K562 (cell line): ENCODE measurements at regions of chr16 and their contacts with region 1.

Region 1: GRCh38 chr16:85610508-85611332 is 2.4 kb upstream of the GSE1 start:
- DNase-seq: peak; percentile 78 to 95 (median 83)
- ATAC-seq: peak; percentile 59
- H3K4me3 ChIP-seq: peak overlapping the region; percentile 85
- H3K27ac ChIP-seq: peak overlapping the region; percentile 99
- H3K4me1 ChIP-seq: peaks cover 58 to 87% of the 10 kb centered on the region in 2 experiments
- H3K27me3 ChIP-seq: no peaks in the 10 kb centered on the region
- CTCF ChIP-seq: peak; percentile 97 to 100 (median 99)
- EP300 ChIP-seq: peak; percentile 60
- POLR2A ChIP-seq: 0 out of 2 replicates have a peak, but pooled peaks have one; percentile 20
- RAD21 ChIP-seq: peak; percentile 96 to 97

Region 2: DNA sequence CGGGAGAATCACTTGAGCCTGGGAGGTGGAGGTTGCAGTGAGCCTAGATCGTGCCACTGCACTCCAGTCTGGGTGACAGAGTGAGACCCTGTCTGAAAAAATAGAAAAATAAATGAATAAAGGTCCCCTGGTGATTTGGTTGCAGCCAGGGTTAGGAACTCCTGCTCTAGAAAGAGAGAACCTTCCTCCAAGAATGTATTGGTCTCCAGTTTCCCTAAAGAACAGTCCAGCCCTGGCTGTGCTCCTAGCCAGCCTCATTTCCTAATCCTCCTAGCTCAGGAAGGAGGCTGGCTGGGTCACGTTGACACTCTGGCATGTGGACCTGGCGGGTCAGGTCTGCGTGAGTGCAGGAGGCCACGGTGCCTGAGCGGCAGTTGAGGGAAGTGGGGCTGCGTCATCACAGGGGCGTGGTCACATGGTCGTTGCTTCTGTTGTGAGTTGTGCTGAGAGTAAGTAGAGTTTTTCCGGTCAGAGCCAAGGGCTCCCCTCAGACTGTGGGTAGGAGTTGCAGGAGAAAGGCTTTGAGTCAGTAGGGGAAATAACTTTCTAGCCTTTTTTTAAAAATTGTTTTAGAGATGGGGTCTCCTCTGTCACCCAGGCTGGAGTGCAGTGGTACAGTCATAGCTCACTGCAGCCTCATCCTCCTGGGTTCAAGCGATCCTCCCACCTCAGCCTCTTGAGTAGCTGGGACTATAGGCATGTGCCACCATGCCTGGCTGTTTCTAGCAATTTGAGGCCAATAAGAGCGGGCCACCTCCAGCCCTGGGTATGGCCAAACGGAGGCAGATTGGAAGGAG is 304.5 kb before region 1 on chr16:
- CTCF ChIA-PET with region 1: interaction called, 5 read pairs
- POLR2A ChIA-PET with region 1: no interaction called
- in situ Hi-C with region 1: no loop called
- intact Hi-C with region 1: loop called (anchors 10 kb)
- DNase-seq: peak; percentile 76 to 95 (median 82)
- ATAC-seq: peak; percentile 83
- H3K4me3 ChIP-seq: no peak overlapping the region
- H3K27ac ChIP-seq: peak overlapping the region; percentile 87
- H3K4me1 ChIP-seq: peaks cover 70 to 94% of the 10 kb centered on the region in 2 experiments
- H3K27me3 ChIP-seq: no peaks in the 10 kb centered on the region
- CTCF ChIP-seq: no peak
- EP300 ChIP-seq: peak; percentile 58
- POLR2A ChIP-seq: peak; percentile 57; the same call in 1 of the 2 replicates
- RAD21 ChIP-seq: no peak; a peak in 1 of 4 replicates

Region 3: DNA sequence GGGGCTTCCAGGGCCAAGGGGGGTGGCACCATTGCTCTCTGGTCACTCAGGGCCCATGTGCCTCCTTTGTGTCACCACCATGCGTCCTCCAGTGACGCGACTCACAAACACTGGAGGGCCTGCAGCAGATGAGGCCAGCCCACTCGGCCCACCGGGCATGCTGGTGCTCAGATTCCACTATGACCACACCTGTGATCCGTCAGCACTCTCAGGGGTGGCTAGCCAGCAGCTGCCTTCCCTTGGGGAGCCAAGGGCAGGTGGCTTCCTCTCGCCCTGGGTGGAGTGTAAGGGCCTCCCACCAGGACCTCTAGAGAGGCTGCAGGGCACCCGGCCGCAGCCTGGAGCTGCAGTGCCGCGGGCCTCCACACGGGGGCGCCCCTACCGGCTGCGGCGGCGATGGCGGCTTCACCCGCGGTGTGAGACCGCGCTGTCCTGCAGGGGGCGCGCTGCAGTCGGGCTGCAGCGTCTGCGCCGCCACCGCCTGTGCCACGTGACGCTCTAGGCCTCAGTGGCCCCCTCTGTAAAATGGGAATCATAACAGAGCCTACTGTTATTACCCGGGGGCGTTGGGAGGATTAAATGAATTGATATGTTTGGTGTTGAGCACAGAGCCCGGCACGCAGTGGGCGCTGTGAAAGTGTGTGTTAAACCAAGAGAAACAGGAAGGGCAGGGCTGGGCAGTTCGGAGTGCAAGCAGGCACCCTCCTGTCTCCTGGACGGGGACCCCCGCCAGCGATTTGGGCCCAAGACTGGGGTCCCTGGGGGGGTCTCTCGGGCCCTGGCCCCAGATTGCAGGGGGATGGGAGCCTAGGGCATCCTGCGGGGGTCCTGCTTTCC is 190.0 kb before region 1 on chr16:
- CTCF ChIA-PET with region 1: interaction called, 16 read pairs
- POLR2A ChIA-PET with region 1: interaction called, 3 read pairs
- in situ Hi-C with region 1: no loop called
- intact Hi-C with region 1: loop called (anchors 1 kb)
- DNase-seq: peak; percentile 92 to 94 (median 92)
- ATAC-seq: peak; percentile 83
- H3K4me3 ChIP-seq: no peak overlapping the region
- H3K27ac ChIP-seq: no peak overlapping the region; the same call in 2 of the 3 replicates
- H3K4me1 ChIP-seq: peaks cover 23 to 87% of the 10 kb centered on the region in 2 experiments
- H3K27me3 ChIP-seq: no peaks in the 10 kb centered on the region
- CTCF ChIP-seq: peak; percentile 100
- EP300 ChIP-seq: no peak
- POLR2A ChIP-seq: no peak
- RAD21 ChIP-seq: peak; percentile 98 to 99

Region 4: DNA sequence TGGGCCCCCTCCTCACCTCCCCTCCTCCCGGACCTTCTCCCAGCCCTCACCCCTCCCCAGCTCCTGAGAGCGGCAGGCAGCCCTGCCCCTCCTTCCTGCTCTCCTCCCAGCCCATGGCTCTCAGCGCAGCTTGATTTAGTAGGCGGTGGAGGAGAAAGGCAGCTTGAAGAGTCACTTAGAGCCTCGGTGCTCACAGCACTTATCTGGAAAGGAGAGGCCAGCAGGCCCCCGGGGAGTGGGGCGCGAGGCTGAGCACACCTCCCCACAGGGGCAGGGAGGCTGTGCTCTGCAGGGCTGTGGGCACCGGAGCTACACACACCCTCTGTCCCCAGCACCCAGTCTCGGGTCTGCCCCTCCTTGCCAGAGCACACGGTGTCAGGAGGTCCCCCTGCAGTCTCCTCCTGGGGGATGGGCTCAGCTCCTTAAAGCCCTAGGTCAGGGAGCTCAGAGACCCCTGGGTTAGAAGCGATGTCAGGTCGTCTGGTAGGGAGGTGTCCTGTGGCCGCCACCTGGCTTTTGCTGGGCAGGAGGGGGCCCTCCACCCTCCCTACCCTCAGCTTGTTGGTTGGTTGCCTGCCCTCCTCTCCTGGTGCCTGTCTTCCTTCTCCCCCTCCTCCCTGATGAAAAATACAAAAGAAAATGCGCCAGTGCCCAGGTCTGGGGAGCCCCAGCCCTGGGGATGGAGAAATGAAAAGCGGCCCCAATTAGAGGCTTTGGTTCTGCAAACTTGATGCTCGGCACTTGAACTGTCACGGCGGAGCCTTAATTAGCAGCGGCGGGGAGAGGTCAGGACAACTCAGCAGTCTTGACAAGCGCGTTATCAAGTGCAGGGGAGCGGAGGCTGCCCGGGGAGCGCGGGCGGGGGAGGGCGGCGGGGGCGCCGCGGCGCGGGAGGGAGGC is 148.7 kb before region 1 on chr16:
- CTCF ChIA-PET with region 1: interaction called, 4 read pairs
- POLR2A ChIA-PET with region 1: no interaction called
- in situ Hi-C with region 1: no loop called
- intact Hi-C with region 1: loop called (anchors 5 kb)
- DNase-seq: peak; percentile 95 to 97 (median 96)
- ATAC-seq: peak; percentile 88
- H3K4me3 ChIP-seq: peak overlapping the region; percentile 34
- H3K27ac ChIP-seq: peak overlapping the region; percentile 78
- H3K4me1 ChIP-seq: peaks cover 45 to 85% of the 10 kb centered on the region in 2 experiments
- H3K27me3 ChIP-seq: no peaks in the 10 kb centered on the region
- CTCF ChIP-seq: peak in 1 of 3 experiments; percentile 6; a peak in 1 of 6 replicates
- EP300 ChIP-seq: peak; percentile 67; the same call in 1 of the 2 replicates
- POLR2A ChIP-seq: no peak; the same call in 1 of the 2 replicates
- RAD21 ChIP-seq: no peak; a peak in 1 of 4 replicates

Region 5: DNA sequence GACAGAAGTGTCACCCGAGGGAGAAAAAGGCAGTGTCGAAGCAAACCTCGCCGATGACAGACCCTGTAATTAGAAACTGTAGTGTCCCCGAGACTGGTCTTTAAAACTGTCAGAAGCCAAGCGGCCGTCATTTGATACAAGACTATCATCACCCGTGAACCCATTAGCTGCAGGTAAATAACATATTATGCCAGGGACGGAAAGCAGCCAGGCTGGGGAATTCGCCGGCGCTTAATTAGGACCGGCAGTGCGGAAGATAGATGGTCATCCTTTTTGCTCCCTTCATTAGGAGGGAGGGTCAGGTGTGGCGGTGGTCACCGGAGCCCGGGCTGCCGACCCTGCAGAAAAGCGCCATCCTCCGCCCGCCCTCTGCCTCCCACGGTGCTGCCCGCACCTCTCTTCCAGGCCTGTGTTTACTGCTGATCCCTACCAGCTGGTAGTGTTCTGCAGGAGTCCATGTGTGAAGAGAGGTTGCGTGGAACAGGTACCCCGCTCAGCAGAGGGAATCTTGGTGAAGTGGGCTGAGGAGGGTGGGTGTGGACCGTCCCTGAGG is 107.0 kb before region 1 on chr16:
- CTCF ChIA-PET with region 1: no interaction called
- POLR2A ChIA-PET with region 1: no interaction called
- in situ Hi-C with region 1: no loop called
- intact Hi-C with region 1: no loop called
- DNase-seq: no peak
- ATAC-seq: no peak
- H3K4me3 ChIP-seq: no peak overlapping the region
- H3K27ac ChIP-seq: no peak overlapping the region
- H3K4me1 ChIP-seq: peaks cover 0 to 50% of the 10 kb centered on the region in 2 experiments; a peak in 2 of 5 replicates
- H3K27me3 ChIP-seq: no peaks in the 10 kb centered on the region
- CTCF ChIP-seq: no peak
- EP300 ChIP-seq: no peak
- POLR2A ChIP-seq: no peak
- RAD21 ChIP-seq: no peak

Region 6: DNA sequence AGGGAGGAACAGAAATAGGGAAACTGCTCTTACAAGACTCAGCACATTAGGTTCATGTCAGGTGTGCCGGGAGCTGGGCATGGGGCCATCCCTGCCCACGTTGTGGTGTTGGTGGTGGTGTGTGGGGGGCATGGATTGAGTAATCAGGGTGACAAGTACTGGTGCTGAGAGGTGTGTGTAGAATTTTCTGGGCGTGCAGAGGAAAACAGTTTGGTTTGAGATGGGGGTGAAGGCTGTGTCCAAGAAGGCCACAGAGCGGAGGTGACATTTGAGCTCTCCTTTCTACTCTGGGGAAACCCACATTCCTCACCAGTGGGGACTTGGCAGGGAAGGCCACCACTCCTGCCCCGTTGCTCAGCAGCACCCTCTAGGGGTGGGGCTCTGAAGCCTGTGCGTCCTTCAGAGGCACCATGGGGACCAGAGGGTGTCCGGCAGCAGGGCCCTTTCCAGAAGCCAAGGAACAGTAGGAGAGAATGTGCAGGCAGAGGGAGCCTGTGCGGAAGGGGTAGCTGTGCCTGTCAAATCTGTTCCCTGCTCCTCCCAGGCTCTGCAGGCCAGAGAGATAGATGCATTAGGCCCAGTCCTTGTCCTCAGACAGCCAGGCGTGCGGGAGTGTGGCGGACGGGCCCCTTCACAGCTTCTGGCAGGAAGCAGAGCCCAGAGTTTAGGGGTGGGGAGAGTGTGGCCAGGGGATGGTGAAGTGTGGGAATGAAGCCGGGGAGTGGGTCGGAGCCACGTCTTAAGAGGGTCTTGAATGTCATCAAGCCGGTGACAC is 46.3 kb before region 1 on chr16:
- CTCF ChIA-PET with region 1: interaction called, 15 read pairs
- POLR2A ChIA-PET with region 1: interaction called, 15 read pairs
- in situ Hi-C with region 1: no loop called
- intact Hi-C with region 1: loop called (anchors 1 kb)
- DNase-seq: peak in 3 of 4 experiments; percentile 58 to 81 (median 74)
- ATAC-seq: peak; percentile 4
- H3K4me3 ChIP-seq: no peak overlapping the region
- H3K27ac ChIP-seq: peak overlapping the region; percentile 97
- H3K4me1 ChIP-seq: peaks cover 90 to 98% of the 10 kb centered on the region in 2 experiments
- H3K27me3 ChIP-seq: no peaks in the 10 kb centered on the region
- CTCF ChIP-seq: peak; percentile 89 to 98 (median 92)
- EP300 ChIP-seq: no peak
- POLR2A ChIP-seq: 0 out of 2 replicates have a peak, but pooled peaks have one; percentile 6
- RAD21 ChIP-seq: peak; percentile 30 to 59; a peak in 3 of 4 replicates